ENCODE measurements at regions of chr1 and their contacts with region 1.

Region 1: GRCh38 chr1:20100632-20101355 is 18.5 kb downstream of the PLA2G2D start:
- DNase-seq: peak; percentile 42 to 71 (median 67)
- H3K4me3 ChIP-seq: no peak overlapping the region
- H3K27ac ChIP-seq: no peak overlapping the region
- H3K4me1 ChIP-seq: no peaks in the 10 kb centered on the region
- H3K27me3 ChIP-seq: peaks cover 0 to 9% (median 0%) of the 10 kb centered on the region in 5 experiments

Region 2: GRCh38 chr1:20151906-20152598 is 51.3 kb after region 1 on chr1:
- CTCF ChIA-PET with region 1: interaction called, 10 read pairs
- POLR2A ChIA-PET with region 1: no interaction called
- DNase-seq: peak; percentile 60 to 71 (median 69)
- H3K4me3 ChIP-seq: peak overlapping the region in 5 of 7 experiments; percentile 25 to 75 (median 57)
- H3K27ac ChIP-seq: no peak overlapping the region
- H3K4me1 ChIP-seq: peaks cover 0 to 24% (median 13%) of the 10 kb centered on the region in 4 experiments
- H3K27me3 ChIP-seq: peaks cover 0 to 7% (median 0%) of the 10 kb centered on the region in 5 experiments

Measured in common myeloid progenitor, CD34-positive (primary cell).